ENCODE measurements at regions of chr20 and their contacts with region 1.

Region 1: GRCh38 chr20:37498066-37498665 is 22.9 kb upstream of the NNAT start:
- DNase-seq: no peak
- ATAC-seq: no peak
- H3K4me3 ChIP-seq: no peak overlapping the region
- H3K27ac ChIP-seq: no peak overlapping the region
- H3K4me1 ChIP-seq: no peaks in the 10 kb centered on the region
- H3K27me3 ChIP-seq: no peaks in the 10 kb centered on the region
- CTCF ChIP-seq: no peak

Region 2: GRCh38 chr20:37142708-37143107 is 355.5 kb before region 1 on chr20:
- CTCF ChIA-PET with region 1: no interaction called
- POLR2A ChIA-PET with region 1: no interaction called
- in situ Hi-C with region 1: no loop called
- intact Hi-C with region 1: no loop called
- DNase-seq: no peak
- ATAC-seq: no peak
- H3K4me3 ChIP-seq: no peak overlapping the region
- H3K27ac ChIP-seq: no peak overlapping the region
- H3K4me1 ChIP-seq: no peaks in the 10 kb centered on the region
- H3K27me3 ChIP-seq: no peaks in the 10 kb centered on the region
- CTCF ChIP-seq: no peak

Region 3: DNA sequence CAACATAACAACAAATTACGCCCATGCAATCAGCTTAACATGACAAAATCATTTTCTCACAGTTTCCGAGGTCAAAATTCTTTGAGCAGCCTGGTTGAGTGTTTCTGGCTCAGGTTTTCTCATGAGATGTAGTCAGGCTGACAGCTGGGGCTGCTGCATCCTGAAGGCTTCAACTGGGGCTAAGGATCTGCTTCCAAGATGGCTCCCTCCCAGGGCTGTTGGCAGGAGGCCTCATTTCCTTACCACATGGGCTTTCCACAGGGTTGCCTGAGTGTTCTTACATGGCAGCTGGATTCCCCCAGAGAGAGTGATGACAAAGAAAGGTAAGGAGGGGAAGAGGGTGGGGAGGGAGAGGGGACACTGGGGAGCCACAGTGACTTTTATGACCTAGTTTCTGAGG is 40.2 kb before region 1 on chr20:
- CTCF ChIA-PET with region 1: no interaction called
- POLR2A ChIA-PET with region 1: interaction called, 13 read pairs
- in situ Hi-C with region 1: no loop called
- intact Hi-C with region 1: no loop called
- DNase-seq: no peak
- ATAC-seq: no peak
- H3K4me3 ChIP-seq: no peak overlapping the region
- H3K27ac ChIP-seq: no peak overlapping the region
- H3K4me1 ChIP-seq: no peaks in the 10 kb centered on the region
- H3K27me3 ChIP-seq: peaks cover 5% of the 10 kb centered on the region; the same call in 1 of the 2 replicates
- CTCF ChIP-seq: no peak

Region 4: GRCh38 chr20:37543828-37544227 is 45.7 kb after region 1 on chr20:
- CTCF ChIA-PET with region 1: no interaction called
- POLR2A ChIA-PET with region 1: no interaction called
- in situ Hi-C with region 1: no loop called
- intact Hi-C with region 1: no loop called
- DNase-seq: no peak
- ATAC-seq: 0 out of 2 replicates have a peak, but pooled peaks have one; percentile 64
- H3K4me3 ChIP-seq: no peak overlapping the region
- H3K27ac ChIP-seq: no peak overlapping the region
- H3K4me1 ChIP-seq: peaks cover 10% of the 10 kb centered on the region
- H3K27me3 ChIP-seq: no peaks in the 10 kb centered on the region
- CTCF ChIP-seq: peak; percentile 57

Region 5: DNA sequence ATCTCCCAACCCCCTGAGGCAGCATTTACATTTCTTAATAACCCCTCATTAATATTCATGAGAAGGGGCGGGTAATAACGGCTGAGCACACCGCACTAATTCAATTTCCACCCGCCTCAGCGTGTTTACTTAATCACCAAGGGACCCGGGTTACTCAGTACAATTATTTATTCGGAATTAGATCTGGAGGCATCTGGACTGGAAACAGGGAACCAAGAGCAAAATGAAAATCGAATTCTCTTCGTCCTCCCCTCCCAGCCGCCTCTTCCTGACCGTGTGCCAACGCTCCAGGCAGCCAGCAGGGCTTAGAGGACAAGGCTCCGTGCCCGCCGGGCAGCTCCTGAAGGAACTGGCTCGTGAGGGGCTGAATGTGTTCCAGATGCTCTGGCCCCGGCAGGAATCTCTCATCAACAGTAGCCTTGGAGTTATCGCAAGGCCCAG is 172.2 kb after region 1 on chr20:
- CTCF ChIA-PET with region 1: no interaction called
- POLR2A ChIA-PET with region 1: no interaction called
- in situ Hi-C with region 1: no loop called
- intact Hi-C with region 1: no loop called
- DNase-seq: no peak
- ATAC-seq: no peak
- H3K4me3 ChIP-seq: peak overlapping the region in 1 of 2 experiments; percentile 3; a peak in 1 of 4 replicates
- H3K27ac ChIP-seq: no peak overlapping the region
- H3K4me1 ChIP-seq: no peaks in the 10 kb centered on the region; the same call in 1 of the 2 replicates
- H3K27me3 ChIP-seq: peaks cover 2% of the 10 kb centered on the region
- CTCF ChIP-seq: no peak